ENCODE measurements at regions of chr9 and their contacts with region 1.

Region 1: DNA sequence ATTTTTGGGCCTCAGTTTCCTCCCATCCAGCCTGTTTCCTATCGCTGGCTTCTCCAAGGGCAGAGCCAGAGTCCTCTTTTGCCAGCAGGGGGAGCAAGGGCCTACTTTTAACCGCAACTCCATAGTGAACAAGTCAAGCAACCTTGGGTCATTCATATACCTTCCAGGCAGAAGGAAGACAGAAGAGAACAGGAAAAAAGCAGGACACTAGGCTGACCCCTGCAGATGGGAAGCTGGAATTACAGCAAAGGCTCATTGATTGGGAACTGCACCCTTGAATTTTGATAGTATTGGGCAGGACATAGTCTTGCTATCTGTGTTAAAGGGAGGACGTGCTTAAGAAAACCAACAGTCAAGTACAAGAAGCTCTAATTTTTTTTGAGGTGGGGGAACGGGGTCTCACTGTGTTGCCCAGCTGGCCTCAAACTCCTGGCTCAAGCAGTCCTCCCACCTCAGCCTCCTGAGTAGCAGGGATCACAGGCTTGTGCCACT is 30.1 kb downstream of the QRFP start:
- DNase-seq: peak; percentile 76
- H3K4me3 Mint-ChIP-seq: no peak overlapping the region
- H3K27ac Mint-ChIP-seq: no peak overlapping the region
- H3K4me1 Mint-ChIP-seq: peaks cover 2% of the 10 kb centered on the region
- H3K27me3 Mint-ChIP-seq: no peaks in the 10 kb centered on the region

Region 2: DNA sequence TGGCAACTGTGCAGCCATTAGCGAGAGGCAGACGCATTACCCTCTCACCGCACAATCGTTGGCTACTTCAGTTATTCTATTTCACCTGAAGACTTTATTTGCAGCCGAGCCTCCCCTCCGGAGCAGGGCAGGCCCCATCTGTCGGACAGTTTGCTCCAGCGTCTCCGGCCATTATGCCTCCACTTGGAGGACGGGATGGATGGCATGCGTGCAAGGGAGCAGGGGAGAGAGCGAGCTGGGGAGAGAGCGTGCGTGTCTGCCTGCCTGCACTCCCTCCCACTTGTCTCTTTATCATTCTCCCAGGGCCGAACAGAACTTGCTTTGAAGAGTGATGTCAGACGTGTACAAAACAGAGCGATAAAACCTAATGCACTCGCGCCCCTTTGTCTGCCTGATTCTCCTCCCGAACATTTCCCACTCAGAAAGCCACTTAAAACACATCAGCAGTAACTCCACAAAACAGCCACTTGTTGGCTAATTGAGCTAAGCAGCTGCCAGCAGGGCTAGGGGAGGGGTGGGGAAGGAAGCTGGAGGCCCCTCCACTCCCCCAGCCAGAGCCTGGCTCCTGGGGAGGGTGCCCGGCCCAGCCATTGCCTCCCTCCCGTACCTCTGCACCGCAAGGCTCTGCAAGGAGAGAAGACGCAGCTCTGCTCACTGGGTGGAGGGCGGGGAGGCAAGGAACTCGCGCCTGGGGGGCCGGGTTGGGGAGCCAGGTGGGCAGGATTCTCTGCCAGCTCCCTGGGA is 330.5 kb before region 1 on chr9:
- CTCF ChIA-PET with region 1: no interaction called
- DNase-seq: no peak
- H3K4me3 Mint-ChIP-seq: no peak overlapping the region
- H3K27ac Mint-ChIP-seq: no peak overlapping the region
- H3K4me1 Mint-ChIP-seq: no peaks in the 10 kb centered on the region
- H3K27me3 Mint-ChIP-seq: peaks cover 84% of the 10 kb centered on the region

Region 3: DNA sequence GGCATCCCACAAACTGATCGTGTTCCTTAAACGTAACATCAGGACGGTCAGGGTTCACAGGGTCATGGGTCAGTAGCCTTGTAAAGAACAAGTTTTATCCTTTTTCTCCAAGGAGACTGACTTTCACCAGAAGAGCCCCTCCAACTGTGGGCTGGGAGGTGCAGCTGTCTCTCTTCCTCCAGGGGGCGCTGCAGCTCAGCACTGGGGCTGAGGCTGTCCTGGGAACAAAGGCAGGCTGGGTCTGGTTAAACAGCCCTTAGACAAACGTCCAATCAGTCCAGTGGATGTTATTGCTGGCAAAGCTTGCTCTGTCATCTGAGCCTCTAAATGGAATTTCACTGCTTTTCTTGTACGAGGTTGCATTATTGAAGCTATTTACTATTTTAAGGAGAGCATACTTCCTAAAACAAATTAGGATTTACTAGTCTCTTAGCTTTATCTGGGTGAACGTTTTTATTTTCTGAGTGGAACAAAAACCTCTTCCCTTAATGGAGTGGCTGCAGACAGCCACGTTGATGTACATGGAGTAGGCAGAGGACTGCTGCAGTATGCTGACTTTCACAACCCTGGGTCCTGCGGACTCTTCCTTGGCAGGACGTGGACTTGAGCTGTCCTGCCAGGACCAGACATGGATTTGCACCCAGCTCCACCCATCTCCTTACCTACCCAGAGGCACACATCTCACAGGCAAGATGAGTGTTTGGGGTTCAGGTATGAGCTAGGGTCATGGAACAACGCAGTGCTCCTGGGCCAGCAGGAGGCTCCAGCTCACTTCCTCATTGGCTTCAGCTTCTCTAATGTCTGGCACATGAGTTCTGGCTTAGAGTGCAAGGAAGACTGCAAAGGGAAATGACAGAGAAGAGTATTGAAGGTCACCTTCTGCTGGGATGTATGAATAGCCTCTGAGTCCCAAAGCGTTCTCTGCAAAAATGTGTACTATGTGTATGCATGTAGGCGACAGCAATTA is 165.2 kb before region 1 on chr9:
- CTCF ChIA-PET with region 1: interaction called, 39 read pairs
- DNase-seq: peak; percentile 77
- H3K4me3 Mint-ChIP-seq: no peak overlapping the region
- H3K27ac Mint-ChIP-seq: no peak overlapping the region
- H3K4me1 Mint-ChIP-seq: peaks cover 19% of the 10 kb centered on the region
- H3K27me3 Mint-ChIP-seq: no peaks in the 10 kb centered on the region

Region 4: DNA sequence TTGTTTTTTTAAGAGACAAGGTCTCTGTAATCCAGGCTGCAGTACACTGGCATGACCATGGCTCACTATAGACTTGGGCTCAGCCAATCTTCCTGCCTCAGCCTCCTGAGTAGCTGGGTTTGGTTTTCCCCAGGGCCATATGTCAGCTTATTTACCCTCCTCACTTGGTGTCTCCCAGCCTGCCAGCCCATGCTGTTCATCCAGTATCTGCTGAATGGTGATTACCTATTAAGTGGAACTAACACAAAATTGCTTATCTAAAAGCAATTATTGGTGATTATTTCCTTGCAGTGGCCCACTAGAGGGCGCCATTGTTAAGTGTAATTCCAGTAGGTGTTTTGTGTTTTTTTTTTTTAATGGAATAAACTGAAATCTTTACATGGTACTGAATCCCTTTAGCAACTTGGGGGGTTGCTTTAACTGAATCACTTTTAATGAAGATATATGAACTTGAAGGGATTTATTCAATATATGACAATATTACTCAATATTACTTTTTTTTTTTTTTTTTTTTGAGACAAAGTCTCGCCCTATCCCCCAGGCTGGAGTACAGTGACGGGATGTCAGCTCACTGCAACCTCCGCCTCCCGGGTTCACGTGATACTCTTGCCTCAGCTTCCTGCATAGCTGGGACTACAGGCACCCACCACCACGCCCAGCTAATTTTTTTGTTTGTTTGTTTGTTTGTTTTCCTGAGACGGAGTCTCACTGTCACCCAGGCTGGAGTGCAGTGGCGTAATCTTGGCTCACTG is 159.1 kb before region 1 on chr9:
- CTCF ChIA-PET with region 1: interaction called, 22 read pairs
- DNase-seq: peak; percentile 79
- H3K4me3 Mint-ChIP-seq: no peak overlapping the region
- H3K27ac Mint-ChIP-seq: no peak overlapping the region
- H3K4me1 Mint-ChIP-seq: peaks cover 4% of the 10 kb centered on the region
- H3K27me3 Mint-ChIP-seq: peaks cover 6% of the 10 kb centered on the region

Region 5: DNA sequence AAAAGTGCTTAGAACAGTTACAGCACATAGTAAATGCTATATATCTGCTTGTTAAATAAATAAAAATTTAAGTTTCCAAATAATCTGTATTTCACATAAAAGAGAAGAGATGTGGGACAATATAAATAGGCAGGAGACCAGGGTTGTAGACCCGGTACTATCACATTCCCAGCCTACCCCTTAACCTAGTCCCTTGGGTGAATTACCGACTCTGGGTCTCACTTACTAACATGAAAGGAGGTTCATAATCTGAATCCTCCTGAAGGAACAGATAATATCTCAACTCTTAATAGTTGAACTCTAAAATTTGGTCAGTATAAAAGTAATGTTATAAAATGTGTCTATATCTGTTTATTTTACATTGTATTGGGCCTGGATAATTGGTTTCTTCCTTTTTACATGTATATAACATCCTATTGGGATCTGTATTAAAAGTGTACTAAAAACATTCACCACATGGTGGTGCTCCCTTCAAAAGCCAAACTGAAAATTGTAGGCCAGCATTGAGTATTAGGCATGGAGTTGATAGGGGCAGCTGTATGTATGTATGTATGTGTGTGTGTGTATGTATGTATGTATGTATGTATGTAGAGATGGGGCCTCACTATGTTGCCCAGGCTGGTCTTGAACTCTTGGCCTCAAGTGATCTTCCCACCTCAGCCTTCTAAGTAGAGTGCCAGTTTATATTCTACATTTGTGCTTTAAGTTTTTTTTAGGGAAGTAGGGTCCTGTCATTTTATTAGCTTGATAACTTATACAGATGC is 95.7 kb before region 1 on chr9:
- CTCF ChIA-PET with region 1: interaction called, 15 read pairs
- DNase-seq: no peak
- H3K4me3 Mint-ChIP-seq: no peak overlapping the region
- H3K27ac Mint-ChIP-seq: no peak overlapping the region
- H3K4me1 Mint-ChIP-seq: peaks cover 18% of the 10 kb centered on the region
- H3K27me3 Mint-ChIP-seq: no peaks in the 10 kb centered on the region

Region 6: DNA sequence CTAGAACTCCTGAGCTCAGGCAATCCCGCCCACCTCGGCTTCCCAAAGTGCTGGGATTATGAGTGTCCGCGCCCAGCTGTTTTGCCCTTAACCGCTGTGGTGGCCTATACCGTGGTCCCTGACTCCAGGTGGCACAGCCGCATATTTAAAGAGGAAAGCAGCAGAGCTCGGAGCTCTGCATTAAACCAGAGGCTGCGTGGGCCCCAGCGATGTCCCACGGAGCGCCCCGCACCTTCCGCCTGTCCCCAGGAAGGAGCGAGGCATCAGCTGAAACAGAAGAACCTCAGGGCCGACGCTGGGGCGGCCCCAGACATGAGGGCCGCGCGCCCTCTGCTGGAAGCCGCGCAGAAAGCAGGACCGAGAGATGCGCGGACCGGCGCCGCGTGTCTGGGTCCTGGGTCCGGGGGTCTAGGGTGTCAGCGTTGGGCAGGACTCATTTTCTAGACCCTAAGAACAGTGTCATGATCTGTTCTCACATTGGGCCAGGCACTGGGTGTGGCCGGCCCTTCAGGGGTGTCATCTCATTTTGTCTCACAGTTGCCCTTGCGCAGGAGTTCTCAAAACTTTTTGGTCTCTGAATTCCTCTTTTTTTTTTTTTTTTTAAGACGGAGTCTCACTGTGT is 180.2 kb after region 1 on chr9:
- CTCF ChIA-PET with region 1: interaction called, 31 read pairs
- DNase-seq: peak; percentile 78
- H3K4me3 Mint-ChIP-seq: no peak overlapping the region
- H3K27ac Mint-ChIP-seq: no peak overlapping the region
- H3K4me1 Mint-ChIP-seq: peaks cover 13% of the 10 kb centered on the region
- H3K27me3 Mint-ChIP-seq: peaks cover 28% of the 10 kb centered on the region